ENCODE measurements at regions of chr11 and their contacts with region 1.

Region 1: GRCh38 chr11:62787005-62787759 is at the start of gene TMEM179B:
- DNase-seq: peak; percentile 83 to 99 (median 90)
- ATAC-seq: peak; percentile 80
- H3K4me3 ChIP-seq: peak within 1 kb of the TSS; percentile 82
- H3K27ac ChIP-seq: peak within 1 kb of the TSS; percentile 92
- H3K4me1 ChIP-seq: peaks cover 27 to 29% of the 10 kb centered on the region in 2 experiments
- H3K27me3 ChIP-seq: no peaks in the 10 kb centered on the region
- CTCF ChIP-seq: peak; percentile 67 to 90 (median 81)
- EP300 ChIP-seq: no peak
- POLR2A ChIP-seq: peak; percentile 96
- RAD21 ChIP-seq: peak; percentile 28 to 52; a peak in 3 of 4 replicates
- polyA plus RNA-seq, gene TMEM179B: 88.6 to 105 TPM

Region 2: GRCh38 chr11:62732801-62733200 is 54.4 kb before region 1 on chr11:
- CTCF ChIA-PET with region 1: interaction called, 25 read pairs
- POLR2A ChIA-PET with region 1: interaction called, 16 read pairs
- in situ Hi-C with region 1: no loop called
- intact Hi-C with region 1: no loop called
- DNase-seq: no peak
- ATAC-seq: peak; percentile 25; the same call in 1 of the 3 replicates
- H3K4me3 ChIP-seq: no peak overlapping the region
- H3K27ac ChIP-seq: no peak overlapping the region
- H3K4me1 ChIP-seq: peaks cover 4 to 6% of the 10 kb centered on the region in 2 experiments; a peak in 3 of 5 replicates
- H3K27me3 ChIP-seq: no peaks in the 10 kb centered on the region
- CTCF ChIP-seq: peak; percentile 22 to 57 (median 37); a peak in 3 of 6 replicates
- EP300 ChIP-seq: no peak
- POLR2A ChIP-seq: no peak
- RAD21 ChIP-seq: peak in 1 of 2 experiments; percentile 28; a peak in 2 of 4 replicates

Region 3: GRCh38 chr11:62805076-62805892 is 18.1 kb after region 1 on chr11 and contains the start of gene NXF1:
- CTCF ChIA-PET with region 1: no interaction called
- POLR2A ChIA-PET with region 1: interaction called, 116 read pairs
- in situ Hi-C with region 1: no loop called
- intact Hi-C with region 1: no loop called
- DNase-seq: peak; percentile 97 to 98 (median 98)
- ATAC-seq: peak; percentile 91
- H3K4me3 ChIP-seq: peak within 1 kb of the TSS; percentile 94
- H3K27ac ChIP-seq: peak within 1 kb of the TSS; percentile 74
- H3K4me1 ChIP-seq: peaks cover 11 to 19% of the 10 kb centered on the region in 2 experiments; a peak in 4 of 5 replicates
- H3K27me3 ChIP-seq: no peaks in the 10 kb centered on the region
- CTCF ChIP-seq: peak in 2 of 3 experiments; percentile 7 to 12; a peak in 2 of 6 replicates
- EP300 ChIP-seq: no peak; the same call in 1 of the 2 replicates
- POLR2A ChIP-seq: peak; percentile 100
- RAD21 ChIP-seq: 0 out of 4 replicates have a peak, but pooled peaks of 1 of the 2 experiments have one; percentile 4
- polyA plus RNA-seq, gene NXF1: 26.8 to 68.8 TPM

Region 4: GRCh38 chr11:62860835-62861563 is 73.8 kb after region 1 on chr11:
- CTCF ChIA-PET with region 1: interaction called, 51 read pairs
- POLR2A ChIA-PET with region 1: interaction called, 42 read pairs
- in situ Hi-C with region 1: no loop called
- intact Hi-C with region 1: loop called (anchors 1 kb)
- DNase-seq: no peak
- ATAC-seq: no peak
- H3K4me3 ChIP-seq: peak overlapping the region; percentile 30; the same call in 1 of the 2 replicates
- H3K27ac ChIP-seq: peak overlapping the region; percentile 63; the same call in 2 of the 3 replicates
- H3K4me1 ChIP-seq: peaks cover 22 to 28% of the 10 kb centered on the region in 2 experiments; a peak in 4 of 5 replicates
- H3K27me3 ChIP-seq: no peaks in the 10 kb centered on the region
- CTCF ChIP-seq: no peak
- EP300 ChIP-seq: no peak
- POLR2A ChIP-seq: no peak
- RAD21 ChIP-seq: peak in 1 of 2 experiments; percentile 7; a peak in 1 of 4 replicates

Region 5: GRCh38 chr11:63023841-63024648 is 236.9 kb after region 1 on chr11:
- CTCF ChIA-PET with region 1: interaction called, 3 read pairs
- POLR2A ChIA-PET with region 1: no interaction called
- in situ Hi-C with region 1: no loop called
- intact Hi-C with region 1: loop called (anchors 2 kb)
- DNase-seq: peak; percentile 80 to 83 (median 82)
- ATAC-seq: peak; percentile 94
- H3K4me3 ChIP-seq: no peak overlapping the region
- H3K27ac ChIP-seq: no peak overlapping the region
- H3K4me1 ChIP-seq: peaks cover 0 to 8% of the 10 kb centered on the region in 2 experiments; a peak in 2 of 5 replicates
- H3K27me3 ChIP-seq: peaks cover 3 to 45% of the 10 kb centered on the region in 2 experiments; a peak in 3 of 5 replicates
- CTCF ChIP-seq: peak; percentile 95 to 99 (median 98)
- EP300 ChIP-seq: no peak
- POLR2A ChIP-seq: no peak
- RAD21 ChIP-seq: peak; percentile 94

Measured in K562 (cell line).